ENCODE measurements at regions of chr7 and their contacts with region 1.

Region 1: GRCh38 chr7:43385856-43386255 is 197.1 kb upstream of the STK17A start:
- DNase-seq: peak; percentile 38
- ATAC-seq: peak; percentile 35; the same call in 1 of the 2 replicates
- H3K4me3 ChIP-seq: no peak overlapping the region
- H3K27ac ChIP-seq: peak overlapping the region; percentile 29; the same call in 1 of the 2 replicates
- H3K4me1 ChIP-seq: peaks cover 6% of the 10 kb centered on the region; the same call in 1 of the 2 replicates
- H3K27me3 ChIP-seq: no peaks in the 10 kb centered on the region
- CTCF ChIP-seq: no peak

Region 2: GRCh38 chr7:43372676-43373355 is 13.0 kb before region 1 on chr7:
- CTCF ChIA-PET with region 1: no interaction called
- POLR2A ChIA-PET with region 1: interaction called, 13 read pairs
- intact Hi-C with region 1: no loop called
- DNase-seq: no peak
- ATAC-seq: no peak
- H3K4me3 ChIP-seq: no peak overlapping the region
- H3K27ac ChIP-seq: no peak overlapping the region
- H3K4me1 ChIP-seq: no peaks in the 10 kb centered on the region
- H3K27me3 ChIP-seq: no peaks in the 10 kb centered on the region
- CTCF ChIP-seq: no peak

Measured in PC-3 (cell line).